CD14-positive monocyte (primary cell): ENCODE measurements at regions of chr9 and their contacts with region 1.

Region 1: GRCh38 chr9:71295928-71296327 is 174.5 kb upstream of the TRPM3 start:
- DNase-seq: no peak
- H3K4me3 ChIP-seq: no peak overlapping the region
- H3K4me3 Mint-ChIP-seq: no peak overlapping the region
- H3K27ac ChIP-seq: no peak overlapping the region
- H3K27ac Mint-ChIP-seq: no peak overlapping the region
- H3K4me1 ChIP-seq: no peaks in the 10 kb centered on the region
- H3K4me1 Mint-ChIP-seq: no peaks in the 10 kb centered on the region
- H3K27me3 ChIP-seq: no peaks in the 10 kb centered on the region
- H3K27me3 Mint-ChIP-seq: peaks cover 0 to 3% (median 0%) of the 10 kb centered on the region in 3 donors
- CTCF ChIP-seq: no peak

Region 2: DNA sequence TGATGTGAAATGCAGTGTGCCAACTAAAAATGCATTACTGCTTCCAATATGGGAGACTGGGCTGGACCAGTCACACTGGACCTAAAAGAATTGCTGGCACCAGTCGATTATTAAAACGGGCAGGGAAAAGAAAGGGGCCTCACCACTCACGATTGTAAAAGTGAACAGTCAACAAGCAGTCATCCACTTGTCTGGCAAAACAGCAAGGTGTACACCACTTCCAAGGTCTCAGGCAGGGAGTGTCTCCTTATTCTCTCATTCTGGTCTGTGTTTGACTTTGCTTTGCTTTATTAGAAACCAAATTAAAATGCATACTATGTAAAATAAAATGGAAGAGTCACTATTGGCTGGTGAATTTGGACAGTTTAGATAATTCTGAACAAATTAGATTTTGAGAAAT is 116.7 kb before region 1 on chr9:
- intact Hi-C with region 1: no loop called
- DNase-seq: no peak
- H3K4me3 ChIP-seq: no peak overlapping the region
- H3K4me3 Mint-ChIP-seq: no peak overlapping the region
- H3K27ac ChIP-seq: no peak overlapping the region
- H3K27ac Mint-ChIP-seq: peak overlapping the region in 1 of 7 donors; percentile 2
- H3K4me1 ChIP-seq: no peaks in the 10 kb centered on the region
- H3K4me1 Mint-ChIP-seq: no peaks in the 10 kb centered on the region
- H3K27me3 ChIP-seq: no peaks in the 10 kb centered on the region
- H3K27me3 Mint-ChIP-seq: peaks cover 0 to 2% (median 0%) of the 10 kb centered on the region in 3 donors
- CTCF ChIP-seq: no peak

Region 3: GRCh38 chr9:71243951-71244350 is 52.0 kb before region 1 on chr9:
- intact Hi-C with region 1: no loop called
- DNase-seq: no peak
- H3K4me3 ChIP-seq: no peak overlapping the region
- H3K4me3 Mint-ChIP-seq: no peak overlapping the region
- H3K27ac ChIP-seq: no peak overlapping the region
- H3K27ac Mint-ChIP-seq: no peak overlapping the region
- H3K4me1 ChIP-seq: no peaks in the 10 kb centered on the region
- H3K4me1 Mint-ChIP-seq: no peaks in the 10 kb centered on the region
- H3K27me3 ChIP-seq: no peaks in the 10 kb centered on the region
- H3K27me3 Mint-ChIP-seq: peaks cover 0 to 2% (median 0%) of the 10 kb centered on the region in 3 donors
- CTCF ChIP-seq: no peak

Region 4: DNA sequence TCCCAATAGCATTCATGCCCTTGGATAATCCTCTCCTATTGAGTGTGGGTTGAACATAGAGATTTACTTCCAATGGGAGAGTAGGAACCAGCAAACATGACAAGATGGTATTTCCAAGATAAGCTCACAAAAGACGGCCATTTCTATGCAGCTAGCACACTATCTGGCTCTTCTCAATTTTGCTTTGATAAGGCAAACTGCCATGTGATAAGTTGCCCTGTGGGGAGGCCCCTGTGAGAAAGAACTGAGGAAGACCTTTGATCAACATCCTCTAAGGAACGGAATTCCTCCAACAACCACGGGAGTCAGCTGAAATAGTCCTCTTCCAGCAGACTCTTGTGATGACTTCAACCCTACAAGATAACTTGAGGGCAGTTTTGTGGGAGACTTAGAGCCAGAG is 37.4 kb after region 1 on chr9:
- intact Hi-C with region 1: loop called in 1 of 2 experiments (anchors 2 kb)
- DNase-seq: no peak
- H3K4me3 ChIP-seq: no peak overlapping the region
- H3K4me3 Mint-ChIP-seq: no peak overlapping the region
- H3K27ac ChIP-seq: no peak overlapping the region
- H3K27ac Mint-ChIP-seq: no peak overlapping the region
- H3K4me1 ChIP-seq: no peaks in the 10 kb centered on the region
- H3K4me1 Mint-ChIP-seq: no peaks in the 10 kb centered on the region
- H3K27me3 ChIP-seq: no peaks in the 10 kb centered on the region
- H3K27me3 Mint-ChIP-seq: no peaks in the 10 kb centered on the region
- CTCF ChIP-seq: no peak